ENCODE measurements at regions of chr19 and their contacts with region 1.

Region 1: GRCh38 chr19:16247353-16248182 is 49.9 kb downstream of the AP1M1 start:
- DNase-seq: peak; percentile 88 to 93
- ATAC-seq: peak; percentile 94 to 98 (median 96)
- H3K4me3 ChIP-seq: no peak overlapping the region
- H3K27ac ChIP-seq: peak overlapping the region in 7 of 10 donors; percentile 8 to 54 (median 25)
- H3K4me1 ChIP-seq: peaks cover 0 to 18% (median 8%) of the 10 kb centered on the region in 9 donors
- H3K27me3 ChIP-seq: no peaks in the 10 kb centered on the region
- CTCF ChIP-seq: peak; percentile 93 to 97 (median 95)

Region 2: GRCh38 chr19:16283210-16284061 is 35.9 kb after region 1 on chr19:
- intact Hi-C with region 1: loop called in 2 of 10 experiments (anchors 5 kb)
- DNase-seq: peak; percentile 81 to 94
- ATAC-seq: peak; percentile 88 to 94 (median 92)
- H3K4me3 ChIP-seq: peak overlapping the region in 8 of 10 donors; percentile 19 to 49 (median 38)
- H3K27ac ChIP-seq: peak overlapping the region; percentile 91 to 99 (median 98)
- H3K4me1 ChIP-seq: peaks cover 13 to 89% (median 57%) of the 10 kb centered on the region in 9 donors
- H3K27me3 ChIP-seq: no peaks in the 10 kb centered on the region
- CTCF ChIP-seq: no peak

Region 3: GRCh38 chr19:16324384-16325160 is 77.0 kb after region 1 on chr19 and contains the start of gene KLF2:
- intact Hi-C with region 1: loop called in 6 of 10 experiments (anchors 2 to 10 kb)
- DNase-seq: peak; percentile 95 to 97
- ATAC-seq: peak; percentile 69 to 92 (median 84)
- H3K4me3 ChIP-seq: peak within 1 kb of the TSS; percentile 61 to 96 (median 87)
- H3K27ac ChIP-seq: peak within 1 kb of the TSS; percentile 93 to 99 (median 98)
- H3K4me1 ChIP-seq: peaks cover 0 to 50% (median 35%) of the 10 kb centered on the region in 9 donors
- H3K27me3 ChIP-seq: no peaks in the 10 kb centered on the region
- CTCF ChIP-seq: no peak
- total RNA-seq, gene KLF2: 25.5 to 76.2 (median 50.4) TPM

Region 4: GRCh38 chr19:16382775-16383543 is 135.4 kb after region 1 on chr19:
- intact Hi-C with region 1: loop called (anchors 1 to 5 kb)
- DNase-seq: peak; percentile 89 to 94
- ATAC-seq: peak; percentile 79 to 90 (median 88)
- H3K4me3 ChIP-seq: peak overlapping the region in 4 of 10 donors; percentile 1 to 22 (median 8)
- H3K27ac ChIP-seq: peak overlapping the region; percentile 72 to 96 (median 90)
- H3K4me1 ChIP-seq: peaks cover 28 to 65% (median 49%) of the 10 kb centered on the region in 9 donors
- H3K27me3 ChIP-seq: no peaks in the 10 kb centered on the region
- CTCF ChIP-seq: peak; percentile 71 to 97 (median 89)

Region 5: GRCh38 chr19:16417660-16418596 is 170.4 kb after region 1 on chr19:
- intact Hi-C with region 1: loop called in 2 of 10 experiments (anchors 10 kb)
- DNase-seq: peak; percentile 58 to 72
- ATAC-seq: peak; percentile 59 to 85 (median 76)
- H3K4me3 ChIP-seq: no peak overlapping the region
- H3K27ac ChIP-seq: peak overlapping the region in 6 of 10 donors; percentile 10 to 62 (median 37)
- H3K4me1 ChIP-seq: peaks cover 8 to 50% (median 30%) of the 10 kb centered on the region in 9 donors
- H3K27me3 ChIP-seq: no peaks in the 10 kb centered on the region
- CTCF ChIP-seq: peak; percentile 82 to 95 (median 92)

Region 6: DNA sequence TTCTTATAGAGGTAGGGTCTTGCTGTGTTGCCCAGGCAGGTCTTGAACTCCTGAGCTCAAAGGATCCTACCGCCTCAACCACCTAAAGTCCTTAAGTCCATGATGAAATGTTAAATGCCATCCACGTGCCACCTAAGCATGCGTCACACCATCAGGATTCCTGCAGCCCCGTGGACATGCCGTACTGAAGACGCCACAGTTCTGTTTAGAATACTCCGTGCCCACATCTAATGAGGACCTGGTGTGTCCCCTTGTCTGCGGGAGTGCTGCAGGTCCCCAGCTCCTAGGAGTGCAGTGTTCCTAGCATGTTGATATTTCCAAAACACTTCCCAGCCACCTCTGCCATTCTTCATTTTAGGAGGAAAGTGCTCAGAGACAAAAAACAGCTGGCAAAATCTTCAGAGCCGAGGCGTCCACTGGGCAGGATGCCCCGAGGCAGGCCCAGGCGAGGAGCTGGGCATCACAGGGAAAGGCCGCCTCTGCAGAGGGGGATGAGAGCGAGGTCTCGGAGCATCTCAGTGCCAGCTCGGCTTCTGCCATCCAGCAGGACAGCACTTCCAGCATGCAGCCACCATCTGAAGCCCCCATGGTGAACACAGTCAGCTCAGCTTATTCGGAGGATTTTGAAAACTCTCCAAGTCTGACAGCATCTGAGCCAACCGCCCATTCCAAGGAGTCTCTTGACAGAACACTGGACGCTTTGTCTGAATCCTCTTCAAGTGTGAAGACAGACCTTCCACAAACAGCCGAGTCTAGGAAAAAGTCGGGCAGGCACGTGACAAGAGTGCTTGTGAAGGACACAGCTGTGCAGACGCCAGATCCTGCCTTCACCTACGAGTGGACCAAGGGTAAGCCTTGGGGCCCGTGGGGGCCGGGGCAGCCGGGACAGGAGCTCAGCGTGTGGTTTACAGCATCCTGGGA is 261.8 kb after region 1 on chr19:
- intact Hi-C with region 1: loop called in 1 of 10 experiments (anchors 10 kb)
- DNase-seq: peak in 1 of 2 donors; percentile 32
- ATAC-seq: peak; percentile 46 to 79 (median 72)
- H3K4me3 ChIP-seq: no peak overlapping the region
- H3K27ac ChIP-seq: peak overlapping the region in 8 of 10 donors; percentile 2 to 52 (median 38)
- H3K4me1 ChIP-seq: no peaks in the 10 kb centered on the region
- H3K27me3 ChIP-seq: no peaks in the 10 kb centered on the region
- CTCF ChIP-seq: no peak

Measured in heart right ventricle (tissue), 16 donors.